ENCODE measurements at regions of chr12 and their contacts with region 1.

Region 1: DNA sequence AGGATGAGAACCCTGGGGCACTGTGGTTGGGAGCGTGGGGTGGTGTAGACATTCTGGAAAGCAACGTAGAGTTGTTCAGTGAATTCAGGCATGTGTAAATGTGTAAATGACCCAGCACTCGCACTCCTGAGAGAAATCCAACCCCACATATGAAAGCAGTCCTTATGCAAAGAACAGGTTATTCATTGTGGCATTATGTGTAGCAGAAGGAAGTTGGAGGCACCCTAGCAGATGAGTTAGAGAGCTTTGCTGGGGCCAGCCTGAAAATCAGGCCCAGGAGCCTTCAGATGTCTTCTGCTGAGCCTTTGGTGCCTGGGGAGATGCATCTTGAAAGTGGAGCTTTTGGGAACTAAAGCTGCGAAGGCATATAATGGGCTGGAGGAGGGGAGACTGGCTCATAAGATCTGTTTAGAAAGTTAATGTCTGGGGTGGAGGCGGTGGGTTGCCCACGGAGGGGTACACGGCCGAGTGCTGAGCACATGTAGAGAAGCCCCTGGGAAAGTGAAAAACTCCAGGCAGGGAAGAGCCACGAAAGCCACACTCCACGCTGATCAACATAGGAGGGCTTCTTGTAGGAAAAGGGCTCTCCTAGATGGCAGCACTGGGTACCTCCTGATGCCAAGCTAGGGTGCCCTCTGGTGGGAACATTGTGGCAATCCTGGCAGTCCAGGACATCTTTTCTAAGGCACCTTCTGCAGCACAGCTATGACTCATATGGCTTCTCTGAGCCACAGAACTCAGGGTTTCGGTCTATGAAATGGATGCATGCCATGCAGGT is 6.0 kb upstream of the KRT83 start:
- DNase-seq: peak; percentile 98
- H3K27ac ChIP-seq: peak overlapping the region; percentile 74
- CTCF ChIP-seq: peak; percentile 91

Region 2: DNA sequence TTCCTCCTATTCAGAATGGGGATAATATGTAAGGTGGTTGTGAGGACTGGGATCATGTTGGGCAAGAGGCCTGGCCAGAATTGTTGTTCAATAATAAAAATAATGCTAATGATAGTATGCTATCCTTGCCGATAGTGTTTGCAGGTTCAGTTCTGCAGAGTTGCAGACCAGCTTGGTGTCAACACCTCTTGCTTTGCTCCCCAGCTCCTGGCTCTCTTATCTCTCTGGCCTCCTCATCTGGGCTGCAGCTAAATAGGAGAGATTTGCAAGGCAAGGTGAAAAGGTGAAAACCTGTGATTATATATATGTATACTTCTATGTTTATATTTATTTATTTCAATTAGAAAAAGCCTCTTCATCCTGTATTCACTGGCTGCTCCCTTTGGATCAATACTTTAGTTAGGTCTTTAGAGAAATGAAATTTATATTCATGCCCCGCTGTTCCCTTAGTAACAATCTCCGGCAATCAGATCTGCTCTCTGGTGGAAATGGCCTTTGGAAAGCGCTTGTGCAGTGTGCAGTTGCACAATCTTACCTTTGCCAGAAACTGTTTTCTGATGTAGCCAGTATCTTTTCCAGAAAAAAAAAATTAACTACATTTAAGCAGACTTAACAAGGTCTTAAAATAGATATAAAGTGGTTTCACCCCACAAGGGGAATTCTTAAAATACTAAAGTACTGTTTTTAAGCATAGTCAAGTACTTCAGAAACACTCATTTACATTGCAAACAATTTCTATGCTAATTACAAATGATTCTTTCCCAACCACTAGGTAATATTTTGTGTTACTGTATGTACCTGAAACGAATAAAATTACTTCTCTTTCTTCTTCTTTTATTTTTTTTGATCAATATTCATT is 394.8 kb before region 1 on chr12:
- CTCF ChIA-PET with region 1: no interaction called
- POLR2A ChIA-PET with region 1: no interaction called
- DNase-seq: no peak
- H3K27ac ChIP-seq: no peak overlapping the region
- CTCF ChIP-seq: no peak

Region 3: DNA sequence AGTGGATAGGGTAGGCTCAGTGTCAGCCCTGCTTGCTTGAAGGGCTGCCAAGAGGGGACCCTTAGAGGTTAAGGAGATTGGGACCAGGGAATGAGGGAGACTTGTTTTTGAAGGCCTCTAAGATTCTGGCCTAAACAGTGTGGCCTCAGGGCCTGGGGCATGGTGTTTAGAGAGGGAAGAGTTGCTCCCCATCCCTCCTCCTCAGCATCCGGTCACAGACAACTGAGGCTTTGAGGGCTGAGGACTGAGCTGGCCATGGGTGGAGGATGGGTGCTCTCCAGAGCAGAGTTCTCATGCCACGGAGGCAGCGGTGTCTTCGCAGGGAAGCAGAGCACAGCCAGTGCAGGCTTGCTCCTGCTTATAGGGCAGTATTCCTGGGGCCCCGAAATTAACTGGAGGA is 184.8 kb before region 1 on chr12:
- CTCF ChIA-PET with region 1: interaction called, 11 read pairs
- POLR2A ChIA-PET with region 1: no interaction called
- DNase-seq: no peak
- H3K27ac ChIP-seq: peak overlapping the region; percentile 100
- CTCF ChIP-seq: no peak

Region 4: GRCh38 chr12:52278541-52279421 is 48.5 kb before region 1 on chr12:
- CTCF ChIA-PET with region 1: interaction called, 15 read pairs
- POLR2A ChIA-PET with region 1: no interaction called
- DNase-seq: peak; percentile 82
- H3K27ac ChIP-seq: peak overlapping the region; percentile 98
- CTCF ChIP-seq: peak; percentile 91

Region 5: DNA sequence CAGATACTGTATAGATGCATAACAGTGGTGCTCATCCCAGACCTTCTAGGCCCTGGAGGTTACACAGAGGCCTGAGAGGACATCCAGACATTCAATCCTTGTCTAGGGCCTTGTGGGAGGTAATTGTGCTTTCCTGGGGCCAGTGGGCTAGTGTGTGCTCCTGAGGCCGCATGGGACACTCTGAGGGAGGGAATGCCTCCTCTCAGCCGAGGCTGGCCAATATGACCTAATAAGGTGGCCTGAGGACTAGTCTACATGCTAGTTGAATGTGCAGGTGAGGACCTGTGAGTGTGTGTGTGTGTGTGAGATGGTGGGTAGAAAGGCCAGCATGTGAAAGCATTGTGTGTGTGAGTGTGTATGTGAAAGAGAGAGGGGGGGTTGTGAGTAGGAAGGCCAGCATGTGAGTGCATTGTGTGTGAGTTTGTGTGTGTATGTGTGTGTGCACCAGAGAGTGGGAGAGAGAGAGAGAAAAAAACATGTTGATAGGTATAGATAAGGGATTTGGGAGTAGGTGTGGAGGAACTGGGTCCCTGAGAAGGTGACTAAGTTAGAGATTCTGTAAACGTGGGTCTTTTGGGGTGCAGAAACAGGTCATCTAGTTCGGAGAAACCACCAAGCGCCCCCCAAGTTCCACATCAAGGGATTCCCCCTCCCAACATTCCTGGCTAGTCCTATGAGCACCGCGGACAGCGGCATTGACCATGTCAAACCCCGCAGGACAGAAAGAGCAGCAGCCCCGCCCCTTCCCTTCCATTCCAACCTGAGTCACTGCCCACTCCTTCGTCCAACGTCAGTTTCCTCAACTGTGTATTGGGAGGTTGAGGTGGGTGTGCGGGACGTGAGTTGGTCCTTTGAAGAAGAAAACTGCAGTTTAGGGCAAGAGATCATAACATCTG is 26.2 kb before region 1 on chr12:
- CTCF ChIA-PET with region 1: no interaction called
- POLR2A ChIA-PET with region 1: no interaction called
- DNase-seq: no peak
- H3K27ac ChIP-seq: no peak overlapping the region
- CTCF ChIP-seq: no peak

Measured in RWPE1 (cell line).